ENCODE measurements at regions of chr20 and their contacts with region 1.

Region 1: GRCh38 chr20:44396369-44397130 is 41.1 kb downstream of the HNF4A start:
- DNase-seq: no peak
- H3K4me3 ChIP-seq: no peak overlapping the region
- H3K27ac ChIP-seq: no peak overlapping the region
- H3K4me1 ChIP-seq: peaks cover 6% of the 10 kb centered on the region
- H3K27me3 ChIP-seq: no peaks in the 10 kb centered on the region; the same call in 1 of the 2 replicates
- CTCF ChIP-seq: no peak

Region 2: DNA sequence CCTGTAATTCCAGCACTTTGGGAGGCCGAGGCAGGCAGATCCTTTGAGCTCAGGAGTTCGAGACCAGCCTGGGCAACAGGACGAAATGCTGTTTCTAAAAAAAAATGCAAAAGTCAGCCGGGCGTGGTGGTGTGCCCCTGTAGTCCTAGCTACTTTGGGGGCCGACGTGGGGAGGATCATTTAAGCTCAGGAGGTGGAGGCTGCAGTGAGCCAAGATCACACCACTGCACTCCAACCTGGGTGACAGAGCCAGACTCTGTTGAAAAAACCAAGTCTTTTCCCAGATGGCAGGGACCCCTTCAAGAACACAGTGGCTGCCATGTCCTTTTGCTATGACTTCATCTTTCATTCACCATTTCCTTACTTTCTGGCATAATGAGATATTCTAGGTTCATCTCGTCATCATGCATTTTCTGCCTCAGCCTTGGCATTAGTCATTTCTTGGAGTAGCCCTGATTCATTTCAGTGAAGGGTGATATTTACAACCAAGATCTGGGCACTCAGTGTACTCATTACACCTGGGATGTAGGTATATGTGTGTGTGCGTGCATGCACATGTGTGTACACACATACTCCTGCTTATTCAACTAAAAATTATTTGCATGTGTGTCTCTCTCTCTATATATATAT is 543.3 kb before region 1 on chr20:
- CTCF ChIA-PET with region 1: interaction called, 24 read pairs
- POLR2A ChIA-PET with region 1: no interaction called
- intact Hi-C with region 1: no loop called
- DNase-seq: no peak
- H3K4me3 ChIP-seq: no peak overlapping the region
- H3K27ac ChIP-seq: no peak overlapping the region
- H3K4me1 ChIP-seq: peaks cover 29% of the 10 kb centered on the region
- H3K27me3 ChIP-seq: no peaks in the 10 kb centered on the region
- CTCF ChIP-seq: no peak

Region 3: GRCh38 chr20:44448753-44449546 is 52.4 kb after region 1 on chr20:
- CTCF ChIA-PET with region 1: no interaction called
- POLR2A ChIA-PET with region 1: no interaction called
- intact Hi-C with region 1: no loop called
- DNase-seq: no peak
- H3K4me3 ChIP-seq: no peak overlapping the region
- H3K27ac ChIP-seq: no peak overlapping the region
- H3K4me1 ChIP-seq: no peaks in the 10 kb centered on the region
- H3K27me3 ChIP-seq: no peaks in the 10 kb centered on the region
- CTCF ChIP-seq: peak; percentile 54

Region 4: GRCh38 chr20:44901974-44902373 is 505.4 kb after region 1 on chr20:
- CTCF ChIA-PET with region 1: no interaction called
- POLR2A ChIA-PET with region 1: no interaction called
- intact Hi-C with region 1: no loop called
- DNase-seq: no peak
- H3K4me3 ChIP-seq: no peak overlapping the region
- H3K27ac ChIP-seq: no peak overlapping the region
- H3K4me1 ChIP-seq: no peaks in the 10 kb centered on the region
- H3K27me3 ChIP-seq: no peaks in the 10 kb centered on the region
- CTCF ChIP-seq: no peak

Measured in PC-9 (cell line).